PC-9 (cell line): ENCODE measurements at regions of chr3 and their contacts with region 1.

Region 1: DNA sequence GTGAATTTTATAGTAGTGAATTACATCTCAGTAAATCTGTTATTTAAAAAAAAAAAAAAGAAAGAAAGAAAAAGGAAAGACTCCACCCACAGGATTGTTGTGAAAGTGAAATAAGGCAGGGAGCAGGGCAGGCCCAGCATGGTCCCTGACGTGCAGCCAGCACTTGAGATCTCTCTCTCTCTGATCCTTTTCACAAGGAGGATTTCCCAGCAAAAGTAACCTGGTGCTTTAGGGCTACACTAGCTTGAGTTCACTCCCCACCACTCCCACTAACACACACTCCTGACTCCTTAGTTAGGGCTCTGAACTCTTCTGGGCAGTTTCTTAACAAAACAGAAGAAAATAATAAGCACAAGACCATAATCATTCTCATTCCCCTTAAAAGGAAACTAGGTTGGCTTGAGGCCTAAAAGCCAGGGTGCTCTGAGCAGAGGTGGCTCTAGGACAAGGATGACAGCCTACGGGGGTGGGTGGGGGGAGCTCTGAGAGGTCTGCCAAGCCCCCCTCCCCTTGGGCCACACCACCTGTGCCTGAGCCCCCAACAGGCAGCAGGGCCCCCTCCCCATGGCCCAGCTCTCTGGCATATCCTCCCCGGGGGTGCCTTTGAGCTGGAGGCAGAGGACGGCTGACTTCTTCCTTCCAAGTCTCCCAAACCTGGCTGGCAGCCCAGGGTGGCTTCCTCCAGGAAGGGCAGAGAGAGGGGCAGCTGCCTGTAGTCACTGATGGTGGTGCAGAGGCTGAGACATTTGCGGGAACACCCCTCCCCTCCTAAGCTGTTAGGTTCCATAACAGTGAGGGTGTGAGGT is 831 bp downstream of the TMEM40 start:
- DNase-seq: peak; percentile 44 to 47
- H3K4me3 ChIP-seq: peak overlapping the region; percentile 42; the same call in 1 of the 2 replicates
- H3K27ac ChIP-seq: peak overlapping the region; percentile 91
- H3K4me1 ChIP-seq: peaks cover 62% of the 10 kb centered on the region
- H3K27me3 ChIP-seq: no peaks in the 10 kb centered on the region
- CTCF ChIP-seq: no peak

Region 2: DNA sequence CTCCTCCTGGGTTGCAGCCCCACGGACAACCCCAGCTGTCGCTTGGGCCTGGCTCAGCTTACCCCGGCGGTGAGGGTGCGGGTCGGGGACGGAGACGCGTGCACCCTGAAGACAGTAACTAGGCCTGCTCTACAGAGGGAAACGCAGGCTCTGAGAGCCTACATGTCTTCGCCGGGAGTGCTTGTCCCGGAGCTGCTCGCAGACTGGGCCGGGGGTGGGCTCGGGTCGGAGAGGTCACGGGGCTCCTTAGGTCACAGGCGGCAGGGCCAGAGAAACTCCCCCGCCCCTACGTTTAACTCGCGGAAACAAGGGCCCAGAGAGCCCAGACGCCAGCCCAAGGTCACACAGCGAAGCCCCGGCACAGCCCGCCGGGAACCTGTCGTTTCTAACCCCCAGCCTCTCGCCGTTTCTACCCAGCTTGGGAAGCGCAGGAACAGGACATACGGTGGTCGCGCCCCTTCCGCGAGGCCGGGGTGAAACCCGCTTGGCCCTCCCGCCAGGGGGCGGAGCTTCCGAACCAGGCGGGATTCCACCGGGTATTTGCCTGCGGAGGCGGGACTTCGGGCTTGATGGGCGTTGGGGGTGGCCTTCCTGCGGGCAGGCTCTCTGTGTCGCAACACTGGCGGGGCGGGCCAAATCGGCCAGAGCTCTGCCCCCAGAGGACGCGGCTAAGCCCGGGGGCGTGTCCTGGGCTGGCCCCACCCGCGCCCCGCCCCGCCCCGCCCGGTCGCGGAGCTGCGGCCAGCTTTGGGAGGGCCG is 721.5 kb after region 1 on chr3 and contains the start of gene HDAC11:
- CTCF ChIA-PET with region 1: no interaction called
- POLR2A ChIA-PET with region 1: interaction called, 16 read pairs
- intact Hi-C with region 1: no loop called
- DNase-seq: peak; percentile 87 to 98
- H3K4me3 ChIP-seq: peak within 1 kb of the TSS; percentile 94
- H3K27ac ChIP-seq: no peak within 1 kb of the TSS
- H3K4me1 ChIP-seq: peaks cover 39% of the 10 kb centered on the region
- H3K27me3 ChIP-seq: no peaks in the 10 kb centered on the region
- CTCF ChIP-seq: peak; percentile 55
- total RNA-seq, gene HDAC11: 18.4 and 24.3 TPM in 2 replicates